ENCODE measurements at regions of chr4 and their contacts with region 1.

Region 1: GRCh38 chr4:2860391-2861348 is 17.0 kb downstream of the ADD1 start:
- DNase-seq: no peak
- ATAC-seq: no peak
- H3K4me3 ChIP-seq: no peak overlapping the region
- H3K4me3 Mint-ChIP-seq: peak overlapping the region in 8 of 10 donors; percentile 5 to 61 (median 30)
- H3K27ac ChIP-seq: no peak overlapping the region
- H3K27ac Mint-ChIP-seq: peak overlapping the region in 7 of 9 donors; percentile 37 to 85 (median 70)
- H3K4me1 ChIP-seq: peaks cover 20 to 51% of the 10 kb centered on the region in 2 donors
- H3K4me1 Mint-ChIP-seq: peaks cover 63 to 92% (median 86%) of the 10 kb centered on the region in 7 donors
- H3K27me3 ChIP-seq: no peaks in the 10 kb centered on the region
- H3K27me3 Mint-ChIP-seq: no peaks in the 10 kb centered on the region

Region 2: DNA sequence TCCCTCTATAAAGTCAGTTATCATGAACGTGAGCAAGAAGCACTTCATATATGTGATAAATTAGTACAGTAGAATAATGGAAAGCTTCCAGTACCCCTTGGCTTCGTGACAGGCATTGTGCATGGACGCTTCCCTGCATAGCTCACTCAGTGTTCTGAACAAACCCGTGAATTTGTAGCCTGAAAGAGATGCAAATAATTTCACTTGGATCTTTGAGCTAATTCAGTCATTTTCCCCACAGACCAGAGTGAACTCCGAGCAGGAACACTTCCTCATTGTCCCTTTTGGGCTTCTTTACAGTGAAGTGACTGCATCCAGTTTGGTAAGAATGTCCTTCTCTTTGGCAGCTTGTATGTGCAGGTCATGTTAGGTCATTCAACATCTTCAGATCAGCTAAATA is 33.1 kb after region 1 on chr4:
- CTCF ChIA-PET with region 1: interaction called, 3 read pairs
- POLR2A ChIA-PET with region 1: interaction called, 3 read pairs
- intact Hi-C with region 1: loop called in 1 of 2 experiments (anchors 1 kb)
- DNase-seq: no peak
- ATAC-seq: no peak
- H3K4me3 ChIP-seq: no peak overlapping the region
- H3K4me3 Mint-ChIP-seq: no peak overlapping the region
- H3K27ac ChIP-seq: no peak overlapping the region
- H3K27ac Mint-ChIP-seq: peak overlapping the region in 2 of 9 donors; percentile 11 to 59
- H3K4me1 ChIP-seq: no peaks in the 10 kb centered on the region
- H3K4me1 Mint-ChIP-seq: peaks cover 0 to 8% (median 4%) of the 10 kb centered on the region in 7 donors
- H3K27me3 ChIP-seq: no peaks in the 10 kb centered on the region
- H3K27me3 Mint-ChIP-seq: no peaks in the 10 kb centered on the region